Activated CD8-positive, alpha-beta T cell treated with anti-CD3 and anti-CD28 coated beads for 36 hours (primary cell): ENCODE measurements at regions of chr3 and their contacts with region 1.

Region 1: DNA sequence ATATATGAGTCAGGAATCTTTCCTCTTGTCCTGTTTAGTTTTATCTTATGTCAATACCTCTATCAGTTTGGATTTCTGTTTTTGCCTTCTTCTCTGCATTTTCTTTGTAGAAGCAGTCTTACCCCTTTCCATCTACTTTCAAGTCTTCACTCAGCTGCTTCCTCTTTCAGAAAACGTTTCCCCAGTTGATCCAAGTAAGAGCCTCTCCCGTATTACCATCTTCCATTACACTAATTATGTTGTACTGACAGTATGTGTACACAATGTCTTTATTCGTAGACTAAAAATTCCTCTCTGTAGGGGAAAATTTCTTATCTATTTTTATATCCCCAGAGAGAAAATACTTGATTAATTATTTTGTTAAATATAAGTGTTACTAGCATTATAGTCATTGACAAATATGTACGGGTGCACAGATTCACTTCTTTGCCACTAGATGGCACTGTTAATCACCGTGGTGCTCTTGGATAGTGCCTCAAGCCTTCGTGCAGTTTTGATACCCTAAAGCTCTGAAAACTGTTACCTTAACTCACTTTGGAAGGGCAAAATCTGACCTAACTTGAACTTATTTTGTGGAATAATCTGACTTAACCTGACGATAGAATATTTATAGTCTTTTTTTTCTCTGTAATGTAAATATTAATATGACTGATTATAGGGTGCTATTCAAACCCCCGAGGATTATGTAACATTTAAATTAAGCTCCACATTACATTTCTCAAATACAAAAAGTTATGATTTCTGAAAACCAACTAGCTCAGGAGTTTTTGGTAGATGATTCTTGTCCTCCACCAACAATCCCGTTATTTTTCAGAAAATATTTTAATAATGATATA is 74.2 kb upstream of the POU1F1 start:
- DNase-seq: peak; percentile 18
- ATAC-seq: peak; percentile 86
- H3K4me3 Mint-ChIP-seq: no peak overlapping the region
- H3K27ac Mint-ChIP-seq: no peak overlapping the region
- H3K4me1 Mint-ChIP-seq: no peaks in the 10 kb centered on the region
- H3K27me3 Mint-ChIP-seq: peaks cover 4% of the 10 kb centered on the region
- CTCF ChIP-seq: peak; percentile 88

Region 2: DNA sequence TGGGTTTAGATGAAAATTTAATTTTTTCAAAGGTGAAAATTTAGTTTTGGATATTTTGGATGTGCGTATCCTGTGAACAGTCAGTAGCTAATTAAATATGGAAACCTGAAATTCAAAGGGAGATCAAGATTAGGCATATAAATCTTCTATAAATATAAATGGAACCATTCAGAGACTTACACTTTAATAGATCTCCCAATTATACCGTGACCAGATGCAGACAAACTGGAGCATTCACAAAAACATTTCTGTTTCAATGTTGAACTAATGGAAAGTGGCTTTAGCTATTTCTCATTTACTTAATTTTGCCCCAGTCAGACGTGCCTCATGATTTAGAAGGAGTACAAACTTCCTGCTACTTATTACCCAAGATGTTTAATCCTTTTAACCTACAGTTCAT is 45.1 kb before region 1 on chr3:
- CTCF ChIA-PET with region 1: interaction called, 10 read pairs
- POLR2A ChIA-PET with region 1: no interaction called
- intact Hi-C with region 1: no loop called
- DNase-seq: no peak
- ATAC-seq: no peak
- H3K4me3 Mint-ChIP-seq: no peak overlapping the region
- H3K27ac Mint-ChIP-seq: no peak overlapping the region
- H3K4me1 Mint-ChIP-seq: no peaks in the 10 kb centered on the region
- H3K27me3 Mint-ChIP-seq: peaks cover 6% of the 10 kb centered on the region
- CTCF ChIP-seq: no peak

Region 3: DNA sequence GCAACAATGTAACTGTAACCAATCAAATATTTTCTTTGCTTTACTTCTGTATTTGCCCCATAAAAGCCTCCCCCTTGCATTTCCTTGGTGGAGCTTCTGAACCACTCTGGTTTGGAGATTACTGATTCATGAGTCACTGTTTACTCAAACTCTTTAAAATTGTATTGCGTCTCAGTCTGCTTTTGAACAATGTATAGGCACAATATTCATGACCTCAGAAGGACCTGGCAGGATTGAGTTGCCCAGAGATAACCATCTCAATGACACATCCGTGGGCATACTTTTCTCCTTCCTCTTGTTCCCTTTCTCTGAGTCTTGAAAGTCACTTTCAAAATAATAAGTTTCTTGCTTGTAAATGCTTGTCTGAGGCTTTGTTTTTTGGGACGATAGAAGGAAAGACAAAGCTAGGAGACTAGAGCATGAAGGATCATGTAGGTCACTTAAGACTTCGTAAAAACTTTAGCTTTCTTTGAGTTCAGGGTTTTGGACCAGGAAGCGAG is 17.1 kb before region 1 on chr3:
- CTCF ChIA-PET with region 1: interaction called, 19 read pairs
- POLR2A ChIA-PET with region 1: no interaction called
- intact Hi-C with region 1: no loop called
- DNase-seq: peak; percentile 40
- ATAC-seq: peak; percentile 97
- H3K4me3 Mint-ChIP-seq: no peak overlapping the region
- H3K27ac Mint-ChIP-seq: peak overlapping the region; percentile 57
- H3K4me1 Mint-ChIP-seq: peaks cover 16% of the 10 kb centered on the region
- H3K27me3 Mint-ChIP-seq: peaks cover 3% of the 10 kb centered on the region
- CTCF ChIP-seq: no peak

Region 4: GRCh38 chr3:87367664-87368063 is 17.1 kb after region 1 on chr3:
- CTCF ChIA-PET with region 1: interaction called, 10 read pairs
- POLR2A ChIA-PET with region 1: no interaction called
- intact Hi-C with region 1: no loop called
- DNase-seq: no peak
- ATAC-seq: no peak
- H3K4me3 Mint-ChIP-seq: no peak overlapping the region
- H3K27ac Mint-ChIP-seq: no peak overlapping the region
- H3K4me1 Mint-ChIP-seq: no peaks in the 10 kb centered on the region
- H3K27me3 Mint-ChIP-seq: peaks cover 6% of the 10 kb centered on the region
- CTCF ChIP-seq: no peak

Region 5: GRCh38 chr3:87503900-87504508 is 153.4 kb after region 1 on chr3:
- CTCF ChIA-PET with region 1: interaction called, 19 read pairs
- POLR2A ChIA-PET with region 1: no interaction called
- intact Hi-C with region 1: loop called (anchors 5 kb)
- DNase-seq: peak; percentile 20
- ATAC-seq: peak; percentile 64
- H3K4me3 Mint-ChIP-seq: no peak overlapping the region
- H3K27ac Mint-ChIP-seq: no peak overlapping the region
- H3K4me1 Mint-ChIP-seq: no peaks in the 10 kb centered on the region
- H3K27me3 Mint-ChIP-seq: no peaks in the 10 kb centered on the region
- CTCF ChIP-seq: peak; percentile 56

Region 6: GRCh38 chr3:88003115-88003755 is 652.7 kb after region 1 on chr3:
- CTCF ChIA-PET with region 1: interaction called, 7 read pairs
- POLR2A ChIA-PET with region 1: no interaction called
- intact Hi-C with region 1: loop called (anchors 5 kb)
- DNase-seq: no peak
- ATAC-seq: no peak
- H3K4me3 Mint-ChIP-seq: no peak overlapping the region
- H3K27ac Mint-ChIP-seq: no peak overlapping the region
- H3K4me1 Mint-ChIP-seq: peaks cover 3% of the 10 kb centered on the region
- H3K27me3 Mint-ChIP-seq: peaks cover 3% of the 10 kb centered on the region
- CTCF ChIP-seq: peak; percentile 85

Region 7: GRCh38 chr3:88180398-88180999 is 829.9 kb after region 1 on chr3:
- CTCF ChIA-PET with region 1: interaction called, 5 read pairs
- POLR2A ChIA-PET with region 1: no interaction called
- intact Hi-C with region 1: loop called (anchors 10 kb)
- DNase-seq: peak; percentile 54
- ATAC-seq: peak; percentile 45
- H3K4me3 Mint-ChIP-seq: no peak overlapping the region
- H3K27ac Mint-ChIP-seq: no peak overlapping the region
- H3K4me1 Mint-ChIP-seq: peaks cover 3% of the 10 kb centered on the region
- H3K27me3 Mint-ChIP-seq: no peaks in the 10 kb centered on the region
- CTCF ChIP-seq: peak; percentile 71